ENCODE measurements at regions of chr11 and their contacts with region 1.

Region 1: GRCh38 chr11:86637988-86638387 is 34.4 kb downstream of the ME3 start:
- DNase-seq: no peak
- ATAC-seq: no peak

Region 2: DNA sequence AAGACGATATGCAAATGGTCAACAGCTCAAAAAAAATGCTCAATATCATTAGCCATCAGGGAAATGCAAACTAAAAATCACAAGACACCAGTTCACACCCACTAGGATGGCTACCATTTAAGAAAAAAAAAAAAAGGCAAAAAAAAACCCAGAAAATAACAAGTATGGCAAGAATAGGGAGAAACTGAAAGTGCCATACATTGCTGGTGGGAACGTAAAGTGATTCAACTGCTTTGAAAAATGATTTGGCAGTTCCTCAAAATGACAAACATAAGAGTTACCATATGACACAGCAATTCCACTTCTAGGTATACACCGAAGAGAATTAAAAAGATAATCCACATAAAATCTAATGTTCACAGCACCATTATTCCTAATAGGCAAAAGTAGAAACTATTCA is 616.6 kb before region 1 on chr11:
- intact Hi-C with region 1: loop called (anchors 5 kb)
- DNase-seq: no peak
- ATAC-seq: no peak